ENCODE measurements at regions of chr7 and their contacts with region 1.

Region 1: GRCh38 chr7:129054438-129055293 is at the start of gene TNPO3:
- DNase-seq: peak; percentile 87
- H3K4me3 Mint-ChIP-seq: peak within 1 kb of the TSS; percentile 99
- H3K27ac Mint-ChIP-seq: peak within 1 kb of the TSS; percentile 99
- H3K4me1 Mint-ChIP-seq: peaks cover 28% of the 10 kb centered on the region
- H3K27me3 Mint-ChIP-seq: peaks cover 10% of the 10 kb centered on the region
- total RNA-seq, gene TNPO3: 52.8 and 53.2 TPM in 2 replicates

Region 2: GRCh38 chr7:128739048-128739962 is 315.4 kb before region 1 on chr7 and contains the start of gene CALU:
- intact Hi-C with region 1: loop called (anchors 1 kb)
- DNase-seq: peak; percentile 95
- H3K4me3 Mint-ChIP-seq: peak within 1 kb of the TSS; percentile 100
- H3K27ac Mint-ChIP-seq: peak within 1 kb of the TSS; percentile 99
- H3K4me1 Mint-ChIP-seq: peaks cover 26% of the 10 kb centered on the region
- H3K27me3 Mint-ChIP-seq: no peaks in the 10 kb centered on the region
- total RNA-seq, gene CALU: 52.8 and 59.2 TPM in 2 replicates

Region 3: GRCh38 chr7:128849804-128850490 is 204.7 kb before region 1 on chr7:
- intact Hi-C with region 1: no loop called
- DNase-seq: no peak
- H3K4me3 Mint-ChIP-seq: no peak overlapping the region
- H3K27ac Mint-ChIP-seq: no peak overlapping the region
- H3K4me1 Mint-ChIP-seq: no peaks in the 10 kb centered on the region
- H3K27me3 Mint-ChIP-seq: peaks cover 4% of the 10 kb centered on the region

Region 4: GRCh38 chr7:128862571-128863432 is 191.9 kb before region 1 on chr7 and contains the start of gene ATP6V1F:
- intact Hi-C with region 1: loop called (anchors 2 kb)
- DNase-seq: peak; percentile 99
- H3K4me3 Mint-ChIP-seq: peak within 1 kb of the TSS; percentile 99
- H3K27ac Mint-ChIP-seq: peak within 1 kb of the TSS; percentile 96
- H3K4me1 Mint-ChIP-seq: peaks cover 19% of the 10 kb centered on the region
- H3K27me3 Mint-ChIP-seq: no peaks in the 10 kb centered on the region
- total RNA-seq, gene ATP6V1F: 131 and 134 TPM in 2 replicates

Region 5: DNA sequence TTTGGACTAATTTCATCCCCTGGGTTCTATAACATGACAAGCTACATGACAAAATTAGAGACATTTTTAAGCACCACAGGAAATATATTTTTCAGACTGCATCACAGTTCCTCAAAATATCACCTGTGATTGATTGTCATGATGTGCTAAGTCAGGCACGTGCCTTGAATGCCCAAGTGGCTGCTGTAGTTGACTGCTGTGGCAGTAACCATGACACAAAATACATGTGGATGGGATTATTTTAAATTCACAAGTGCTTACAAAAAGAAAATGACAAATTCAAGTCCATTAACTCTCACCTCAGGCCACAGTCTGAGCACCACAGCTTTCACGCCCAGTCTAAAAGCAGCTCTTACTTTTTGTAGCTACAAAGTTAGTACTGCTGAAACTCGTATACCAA is 45.2 kb before region 1 on chr7:
- intact Hi-C with region 1: loop called (anchors 1 kb)
- DNase-seq: no peak
- H3K4me3 Mint-ChIP-seq: no peak overlapping the region
- H3K27ac Mint-ChIP-seq: peak overlapping the region; percentile 77
- H3K4me1 Mint-ChIP-seq: peaks cover 29% of the 10 kb centered on the region
- H3K27me3 Mint-ChIP-seq: no peaks in the 10 kb centered on the region

Region 6: DNA sequence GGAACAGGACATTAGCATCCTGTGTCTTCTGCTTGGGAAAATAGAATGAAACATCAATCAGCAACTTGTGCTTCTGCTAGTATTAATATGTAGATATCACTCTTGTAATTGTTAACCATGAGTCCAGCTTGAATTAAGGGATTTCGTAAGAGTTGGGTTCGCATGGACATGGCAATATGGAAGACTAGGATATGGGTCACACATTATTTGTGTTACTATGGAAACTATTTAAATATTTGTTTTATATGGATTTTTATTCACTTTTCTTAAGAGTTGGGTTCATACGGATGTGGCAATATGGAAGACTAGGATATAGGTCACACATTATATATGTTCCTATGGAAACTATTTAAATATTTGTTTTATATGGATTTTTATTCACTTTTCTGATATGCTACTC is 24.2 kb before region 1 on chr7:
- intact Hi-C with region 1: no loop called
- DNase-seq: no peak
- H3K4me3 Mint-ChIP-seq: no peak overlapping the region
- H3K27ac Mint-ChIP-seq: no peak overlapping the region
- H3K4me1 Mint-ChIP-seq: peaks cover 13% of the 10 kb centered on the region
- H3K27me3 Mint-ChIP-seq: no peaks in the 10 kb centered on the region

Region 7: DNA sequence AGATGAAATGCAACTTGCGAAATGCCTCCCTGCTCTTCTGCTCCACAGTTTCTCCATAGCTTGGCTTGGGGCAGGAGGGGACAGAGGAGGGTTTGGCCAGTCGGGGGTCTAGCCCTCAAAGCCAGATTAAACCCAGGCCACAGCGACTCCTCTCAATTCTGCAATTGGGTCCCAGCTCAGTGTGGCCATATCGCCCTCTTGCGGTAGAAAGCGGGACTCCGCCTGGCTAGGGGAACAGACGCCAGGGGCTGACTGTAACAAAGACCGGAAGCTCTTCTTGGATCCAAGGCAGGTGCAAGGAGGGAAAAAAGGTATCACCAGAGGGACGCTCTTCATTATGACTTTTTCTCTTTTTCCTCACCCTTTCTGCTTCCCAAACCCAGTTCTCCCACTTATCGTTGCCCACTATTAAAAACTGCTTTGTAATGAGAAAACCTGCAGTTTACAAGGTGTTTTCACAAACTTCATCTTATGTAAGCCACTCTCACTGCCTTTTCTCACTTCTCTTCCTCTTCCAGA is 36.9 kb after region 1 on chr7:
- intact Hi-C with region 1: loop called (anchors 1 kb)
- DNase-seq: peak; percentile 78
- H3K4me3 Mint-ChIP-seq: no peak overlapping the region
- H3K27ac Mint-ChIP-seq: peak overlapping the region; percentile 18
- H3K4me1 Mint-ChIP-seq: peaks cover 31% of the 10 kb centered on the region
- H3K27me3 Mint-ChIP-seq: no peaks in the 10 kb centered on the region

Region 8: DNA sequence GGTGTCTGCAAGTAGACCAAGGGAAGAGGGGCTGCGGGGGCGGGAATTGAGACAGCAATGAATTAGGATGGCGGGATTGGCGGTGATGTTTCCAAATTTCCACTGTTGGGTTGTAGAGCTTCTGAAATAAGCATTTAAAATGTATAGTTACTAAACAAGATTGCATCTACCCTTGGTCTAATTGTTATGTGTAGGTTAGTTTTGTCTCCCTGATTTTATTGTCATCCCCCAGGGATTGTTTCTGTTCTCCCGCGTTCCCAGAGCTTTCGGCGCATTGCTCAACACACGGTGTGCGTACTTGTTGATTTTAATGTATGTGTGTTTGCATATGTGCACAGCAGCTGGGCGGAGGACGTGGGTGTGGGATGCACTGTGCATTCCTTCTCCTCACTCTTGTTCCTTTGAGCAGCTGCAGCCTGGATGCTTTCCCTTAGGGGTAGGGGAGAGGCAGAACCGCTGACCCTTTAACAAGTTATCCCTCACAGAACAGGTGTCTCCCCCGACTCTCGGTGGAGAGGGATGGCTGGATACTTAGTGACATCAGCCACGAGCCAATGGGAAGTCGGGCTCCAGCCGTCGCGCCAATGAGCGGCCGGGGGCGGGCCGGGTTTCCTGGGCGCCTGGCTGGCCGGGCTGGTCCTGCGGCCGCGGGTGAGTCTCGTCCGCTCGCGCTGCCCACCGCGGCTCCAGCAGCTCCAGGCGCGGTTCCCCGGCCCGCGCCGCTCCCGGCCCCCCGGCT is 89.6 kb after region 1 on chr7 and contains the start of gene TSPAN33:
- intact Hi-C with region 1: loop called (anchors 1 kb)
- DNase-seq: peak; percentile 67
- H3K4me3 Mint-ChIP-seq: peak within 1 kb of the TSS; percentile 89
- H3K27ac Mint-ChIP-seq: peak within 1 kb of the TSS; percentile 27
- H3K4me1 Mint-ChIP-seq: peaks cover 16% of the 10 kb centered on the region
- H3K27me3 Mint-ChIP-seq: peaks cover 25% of the 10 kb centered on the region
- total RNA-seq, gene TSPAN33: 9.5 and 9.8 TPM in 2 replicates

Region 9: GRCh38 chr7:129159539-129159938 is 104.9 kb after region 1 on chr7:
- intact Hi-C with region 1: no loop called
- DNase-seq: no peak
- H3K4me3 Mint-ChIP-seq: no peak overlapping the region
- H3K27ac Mint-ChIP-seq: no peak overlapping the region
- H3K4me1 Mint-ChIP-seq: no peaks in the 10 kb centered on the region
- H3K27me3 Mint-ChIP-seq: peaks cover 3% of the 10 kb centered on the region

Measured in activated T-helper 1 cell treated with anti-CD3 and anti-CD28 coated beads, Interleukin-12 subunit alpha, Interleukin-12 subunit beta, Interleukin-2, Interleukin-4 antibody, amounts not matched to agents 30 ng/mL and 10 ng/mL and 1 ng/mL, durations not matched to agents 14 hours and 24 hours and 36 hours (primary cell).